SK-N-SH (cell line): ENCODE measurements at regions of chr9 and their contacts with region 1.

Region 1: DNA sequence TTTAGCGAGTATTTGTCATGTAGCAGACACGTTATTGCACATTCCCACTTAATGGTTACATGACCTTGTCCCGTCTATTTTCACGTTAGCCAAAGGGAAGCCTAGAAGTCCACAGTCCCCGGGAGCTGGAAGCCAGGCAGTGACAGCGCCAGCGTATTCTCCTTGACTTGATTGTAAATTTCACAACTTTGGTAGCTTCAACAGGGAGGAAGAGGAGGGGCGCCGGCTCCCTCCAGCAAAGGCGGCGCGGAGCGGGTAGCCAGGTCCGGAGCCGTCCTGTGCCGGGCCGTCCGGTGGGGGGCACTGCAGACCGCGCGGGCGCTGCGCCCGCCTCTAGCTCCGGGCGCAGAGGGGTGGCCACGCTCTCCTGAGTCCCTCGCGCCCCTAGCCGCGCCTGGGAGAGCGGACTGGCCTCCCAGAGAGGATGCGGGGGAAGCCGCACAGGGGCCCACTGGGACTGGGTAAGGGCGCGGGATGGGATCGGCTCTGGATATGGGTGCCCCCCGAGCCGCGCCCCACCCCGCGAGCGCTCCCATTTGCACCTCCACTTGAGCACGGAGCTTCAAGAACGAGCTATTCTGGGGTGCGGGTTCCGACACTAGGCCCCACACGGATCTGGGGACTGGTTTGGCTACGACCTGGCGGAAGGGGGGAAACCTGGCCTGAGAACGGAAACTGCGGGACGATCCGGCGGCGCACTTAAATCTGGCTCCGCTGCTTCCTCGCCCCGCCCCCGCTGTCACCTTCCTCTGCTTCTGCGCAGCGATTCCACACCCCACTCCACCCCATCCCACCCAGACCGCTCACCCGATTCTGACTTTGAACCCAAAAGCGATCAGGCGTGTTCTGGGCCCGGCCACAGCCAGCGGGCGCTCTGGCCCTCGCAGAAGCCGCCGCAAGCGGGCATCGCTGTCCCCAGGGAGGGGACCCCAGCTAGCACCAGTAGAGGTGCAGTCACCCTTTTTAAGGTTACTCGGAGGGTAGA is 23.8 kb downstream of the KLF4 start:
- DNase-seq: peak; percentile 84
- H3K4me3 ChIP-seq: peak overlapping the region; percentile 43 to 65
- H3K27ac ChIP-seq: no peak overlapping the region
- H3K4me1 ChIP-seq: no peaks in the 10 kb centered on the region; a peak in 1 of 4 replicates
- H3K27me3 ChIP-seq: peaks cover 40% of the 10 kb centered on the region
- CTCF ChIP-seq: peak; percentile 71
- EP300 ChIP-seq: peak in 1 of 2 experiments; percentile 7; a peak in 1 of 4 replicates
- RAD21 ChIP-seq: peak; percentile 58

Region 2: DNA sequence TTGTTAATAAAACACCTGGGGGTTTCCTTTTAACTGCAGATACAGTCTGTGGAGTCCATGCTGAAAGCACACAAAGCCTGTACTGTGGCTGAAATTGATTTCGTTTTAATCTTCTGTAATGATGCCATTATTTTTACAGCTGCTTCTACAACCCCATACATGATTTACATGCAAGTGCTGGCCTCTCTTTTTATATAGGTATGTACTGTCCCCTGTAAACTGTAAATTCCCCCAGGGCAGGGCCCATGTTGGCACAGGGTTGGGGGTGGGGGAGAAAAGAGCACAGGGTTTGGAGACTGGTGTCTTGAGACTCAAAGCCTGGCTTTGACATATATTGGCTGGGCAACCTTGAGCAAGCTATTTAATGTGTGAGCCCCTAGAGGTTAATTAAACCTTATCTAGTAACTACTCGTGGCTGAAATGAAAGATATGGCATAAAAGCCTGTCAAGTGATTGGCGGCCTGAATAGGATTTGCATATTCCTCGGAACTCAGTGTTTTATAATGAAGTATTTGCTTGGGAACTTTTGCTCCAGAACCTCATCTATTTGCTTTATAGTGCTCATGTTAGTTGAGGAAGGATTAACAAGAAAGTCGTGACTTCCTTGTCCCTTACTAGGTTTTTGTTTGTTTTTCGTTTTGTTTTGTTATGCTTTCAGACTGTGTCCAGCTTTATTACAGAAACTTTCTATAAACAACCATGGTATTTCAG is 10.2 kb before region 1 on chr9:
- CTCF ChIA-PET with region 1: interaction called, 10 read pairs
- POLR2A ChIA-PET with region 1: no interaction called
- DNase-seq: no peak
- H3K4me3 ChIP-seq: no peak overlapping the region
- H3K27ac ChIP-seq: no peak overlapping the region
- H3K4me1 ChIP-seq: no peaks in the 10 kb centered on the region
- H3K27me3 ChIP-seq: peaks cover 22% of the 10 kb centered on the region; the same call in 1 of the 2 replicates
- CTCF ChIP-seq: no peak
- EP300 ChIP-seq: no peak
- RAD21 ChIP-seq: no peak